ENCODE measurements at regions of chr17 and their contacts with region 1.

Region 1: DNA sequence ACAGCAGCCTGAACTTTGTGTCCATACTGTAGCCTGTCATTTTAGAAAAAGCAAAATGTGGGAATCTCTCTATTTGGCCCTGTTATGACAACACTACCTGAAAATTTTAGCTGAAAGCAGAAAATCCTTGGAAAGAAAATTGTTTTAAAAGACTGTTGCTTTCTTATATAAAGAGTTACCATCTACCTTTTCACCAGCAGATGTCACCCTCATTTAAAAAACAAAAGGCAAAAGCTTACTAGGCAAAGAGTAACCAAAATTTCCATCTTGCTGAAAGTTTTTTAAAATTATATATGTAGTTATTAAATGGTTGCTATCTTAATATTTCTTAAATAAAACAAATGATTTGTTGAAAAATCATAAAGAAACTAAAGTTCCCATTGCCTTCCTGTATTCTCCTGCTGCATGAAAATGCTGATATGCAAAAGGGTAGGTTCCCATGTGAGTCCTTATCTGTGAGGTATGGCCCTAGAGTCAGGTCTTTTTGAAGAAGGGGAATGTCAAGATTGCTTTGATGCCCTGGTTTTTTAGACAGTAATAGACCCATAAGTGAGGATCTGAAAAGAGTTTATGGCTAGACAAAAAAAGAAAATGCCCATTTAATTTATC is 61.0 kb downstream of the TNRC6C start:
- DNase-seq: no peak
- ATAC-seq: peak in 2 of 4 donors; percentile 41 to 65
- H3K4me3 ChIP-seq: no peak overlapping the region
- H3K27ac ChIP-seq: peak overlapping the region; percentile 62
- H3K4me1 ChIP-seq: peaks cover 21% of the 10 kb centered on the region
- H3K27me3 ChIP-seq: no peaks in the 10 kb centered on the region
- CTCF ChIP-seq: peak; percentile 71

Region 2: DNA sequence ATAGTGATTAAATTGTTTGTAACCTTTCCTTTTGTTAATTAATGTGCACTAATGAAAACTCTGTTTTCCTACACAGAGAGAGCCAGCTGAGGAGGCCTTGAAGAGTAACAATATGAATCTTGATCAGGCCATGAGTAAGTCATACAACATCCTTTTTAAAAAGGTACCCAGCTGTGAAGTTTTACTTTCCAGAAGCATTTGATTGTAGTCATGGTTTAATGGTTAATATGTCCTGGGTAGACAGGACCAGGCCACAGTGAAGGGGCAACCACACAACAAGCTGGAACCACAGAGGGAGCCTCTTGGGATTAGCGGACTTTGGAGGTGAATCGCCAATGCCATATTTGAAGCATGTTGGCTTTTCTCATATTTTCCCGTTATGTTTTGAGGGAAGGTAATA is 53.5 kb after region 1 on chr17:
- intact Hi-C with region 1: loop called (anchors 5 kb)
- DNase-seq: no peak
- ATAC-seq: no peak
- H3K4me3 ChIP-seq: no peak overlapping the region
- H3K27ac ChIP-seq: no peak overlapping the region
- H3K4me1 ChIP-seq: no peaks in the 10 kb centered on the region
- H3K27me3 ChIP-seq: no peaks in the 10 kb centered on the region
- CTCF ChIP-seq: no peak

Region 3: GRCh38 chr17:78250891-78251794 is 231.7 kb after region 1 on chr17:
- intact Hi-C with region 1: loop called in 1 of 2 experiments (anchors 5 kb)
- DNase-seq: peak; percentile 87 to 93
- ATAC-seq: peak; percentile 83 to 88 (median 86)
- H3K4me3 ChIP-seq: peak overlapping the region; percentile 4
- H3K27ac ChIP-seq: no peak overlapping the region
- H3K4me1 ChIP-seq: peaks cover 13% of the 10 kb centered on the region
- H3K27me3 ChIP-seq: no peaks in the 10 kb centered on the region
- CTCF ChIP-seq: peak; percentile 100